ENCODE measurements at regions of chr14 and their contacts with region 1.

Region 1: GRCh38 chr14:100076133-100076532 is 10.9 kb downstream of the EVL start:
- DNase-seq: peak; percentile 56
- H3K4me3 ChIP-seq: no peak overlapping the region
- H3K27ac ChIP-seq: no peak overlapping the region
- H3K4me1 ChIP-seq: peaks cover 28% of the 10 kb centered on the region
- H3K27me3 ChIP-seq: no peaks in the 10 kb centered on the region
- CTCF ChIP-seq: peak; percentile 42 to 43

Region 2: DNA sequence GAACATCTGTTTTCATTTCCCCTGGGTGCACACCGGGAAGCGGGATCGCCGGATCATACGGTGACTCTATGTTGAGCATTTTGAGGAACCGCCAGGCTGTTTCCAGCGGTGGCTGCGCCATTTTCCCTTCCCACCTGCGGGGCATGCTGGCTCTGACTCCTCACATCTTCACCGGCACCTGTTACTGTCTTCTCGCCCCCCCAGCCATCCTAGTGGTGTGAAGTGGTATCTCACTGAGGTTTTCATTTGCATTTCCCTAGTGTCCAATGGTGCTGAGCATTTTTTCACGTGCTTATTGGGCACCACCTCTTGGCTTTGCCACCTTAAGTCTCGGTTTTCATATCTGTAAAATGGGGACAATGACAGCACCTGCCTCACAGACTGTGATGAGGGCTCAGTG is 327.0 kb before region 1 on chr14:
- CTCF ChIA-PET with region 1: no interaction called
- dilution Hi-C with region 1: no loop called
- in situ Hi-C with region 1: no loop called
- intact Hi-C with region 1: no loop called
- DNase-seq: no peak
- H3K4me3 ChIP-seq: no peak overlapping the region
- H3K27ac ChIP-seq: no peak overlapping the region
- H3K4me1 ChIP-seq: peaks cover 6% of the 10 kb centered on the region
- H3K27me3 ChIP-seq: peaks cover 9% of the 10 kb centered on the region
- CTCF ChIP-seq: peak in 1 of 2 donors; percentile 9

Region 3: DNA sequence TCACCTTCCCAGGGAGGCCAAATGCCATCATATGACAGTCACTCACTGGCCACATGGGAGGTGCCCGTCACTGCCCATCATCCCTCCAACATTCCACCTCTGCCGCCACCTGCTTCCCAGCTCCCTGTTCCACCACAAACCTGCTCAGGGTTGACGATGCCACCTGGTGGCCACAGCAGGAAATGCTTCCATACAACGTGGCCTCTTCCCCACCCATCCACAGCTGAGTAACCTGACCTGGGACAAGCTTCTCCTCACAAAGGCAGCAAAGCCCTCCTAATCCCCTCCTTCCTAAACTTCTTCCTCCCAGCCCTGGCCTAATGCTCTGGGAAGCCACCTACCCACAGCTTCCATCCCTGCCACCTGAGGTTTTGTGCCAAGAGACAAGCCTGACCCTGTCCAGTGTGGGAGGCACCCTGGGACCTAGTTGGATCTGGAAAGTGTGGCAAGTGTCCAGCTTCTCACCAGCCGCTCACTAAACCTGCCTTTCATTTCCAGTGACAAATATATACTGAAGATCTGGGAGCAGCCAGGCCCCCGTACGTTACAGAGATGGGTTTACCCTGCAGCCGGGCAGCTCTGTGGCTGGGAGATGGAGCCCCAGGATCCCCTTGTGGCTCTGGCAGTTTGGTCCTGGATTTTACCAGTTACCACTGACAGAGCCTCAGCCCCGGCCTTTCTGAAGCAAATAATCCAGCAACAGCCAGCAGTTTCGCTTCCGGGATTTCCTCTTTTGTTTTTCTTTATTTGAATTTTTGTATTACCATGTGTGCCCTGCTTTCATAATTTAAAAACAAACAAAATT is 79.1 kb after region 1 on chr14:
- CTCF ChIA-PET with region 1: no interaction called
- dilution Hi-C with region 1: no loop called
- in situ Hi-C with region 1: no loop called
- intact Hi-C with region 1: loop called (anchors 1 kb)
- DNase-seq: no peak
- H3K4me3 ChIP-seq: no peak overlapping the region
- H3K27ac ChIP-seq: no peak overlapping the region
- H3K4me1 ChIP-seq: peaks cover 19% of the 10 kb centered on the region
- H3K27me3 ChIP-seq: peaks cover 5% of the 10 kb centered on the region
- CTCF ChIP-seq: peak; percentile 70 to 77

Region 4: GRCh38 chr14:100348784-100349704 is 272.9 kb after region 1 on chr14:
- CTCF ChIA-PET with region 1: no interaction called
- dilution Hi-C with region 1: no loop called
- in situ Hi-C with region 1: no loop called
- intact Hi-C with region 1: no loop called
- DNase-seq: no peak
- H3K4me3 ChIP-seq: no peak overlapping the region
- H3K27ac ChIP-seq: no peak overlapping the region
- H3K4me1 ChIP-seq: no peaks in the 10 kb centered on the region
- H3K27me3 ChIP-seq: no peaks in the 10 kb centered on the region
- CTCF ChIP-seq: no peak

Region 5: GRCh38 chr14:100428727-100429126 is 352.6 kb after region 1 on chr14:
- CTCF ChIA-PET with region 1: no interaction called
- dilution Hi-C with region 1: no loop called
- in situ Hi-C with region 1: no loop called
- intact Hi-C with region 1: no loop called
- DNase-seq: no peak
- H3K4me3 ChIP-seq: no peak overlapping the region
- H3K27ac ChIP-seq: no peak overlapping the region
- H3K4me1 ChIP-seq: peaks cover 17% of the 10 kb centered on the region
- H3K27me3 ChIP-seq: no peaks in the 10 kb centered on the region
- CTCF ChIP-seq: no peak